Activated T-helper 1 cell treated with anti-CD3 and anti-CD28 coated beads, Interleukin-12 subunit alpha, Interleukin-12 subunit beta, Interleukin-2, Interleukin-4 antibody, amounts not matched to agents 30 ng/mL and 10 ng/mL and 1 ng/mL, durations not matched to agents 14 hours and 24 hours and 36 hours (primary cell): ENCODE measurements at regions of chr3 and their contacts with region 1.

Region 1: GRCh38 chr3:138915503-138916498 is 31.1 kb downstream of the FOXL2 start:
- DNase-seq: peak; percentile 68
- H3K4me3 Mint-ChIP-seq: peak overlapping the region; percentile 86
- H3K27ac Mint-ChIP-seq: peak overlapping the region; percentile 71
- H3K4me1 Mint-ChIP-seq: peaks cover 6% of the 10 kb centered on the region
- H3K27me3 Mint-ChIP-seq: peaks cover 16% of the 10 kb centered on the region

Region 2: GRCh38 chr3:138180375-138181029 is 735.3 kb before region 1 on chr3:
- intact Hi-C with region 1: loop called (anchors 5 kb)
- DNase-seq: no peak
- H3K4me3 Mint-ChIP-seq: no peak overlapping the region
- H3K27ac Mint-ChIP-seq: no peak overlapping the region
- H3K4me1 Mint-ChIP-seq: peaks cover 5% of the 10 kb centered on the region
- H3K27me3 Mint-ChIP-seq: peaks cover 12% of the 10 kb centered on the region

Region 3: GRCh38 chr3:138417559-138417982 is 498.2 kb before region 1 on chr3:
- intact Hi-C with region 1: loop called (anchors 2 kb)
- DNase-seq: peak; percentile 42
- H3K4me3 Mint-ChIP-seq: no peak overlapping the region
- H3K27ac Mint-ChIP-seq: no peak overlapping the region
- H3K4me1 Mint-ChIP-seq: no peaks in the 10 kb centered on the region
- H3K27me3 Mint-ChIP-seq: peaks cover 13% of the 10 kb centered on the region

Region 4: DNA sequence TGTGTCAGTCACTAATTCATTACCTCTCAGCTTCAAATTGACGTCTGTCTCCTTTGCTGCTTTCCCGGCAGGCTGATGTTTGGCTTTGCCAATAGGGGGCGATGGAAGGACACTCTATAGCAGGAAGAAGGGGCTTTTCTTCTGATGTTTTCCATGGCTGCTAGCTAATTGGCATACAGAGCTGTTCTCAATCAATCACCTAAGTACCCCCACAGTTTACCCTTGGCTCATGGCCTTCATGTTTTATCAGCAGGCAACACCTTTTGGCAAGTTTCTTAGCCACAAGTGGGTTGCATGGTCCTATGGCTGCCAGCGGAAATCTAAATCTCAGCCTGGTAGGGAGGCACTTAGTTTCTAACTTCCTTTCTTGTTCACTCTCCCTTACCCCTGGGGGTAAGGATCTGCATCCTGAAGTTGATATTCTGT is 436.4 kb before region 1 on chr3:
- intact Hi-C with region 1: loop called (anchors 1 kb)
- DNase-seq: no peak
- H3K4me3 Mint-ChIP-seq: no peak overlapping the region
- H3K27ac Mint-ChIP-seq: no peak overlapping the region
- H3K4me1 Mint-ChIP-seq: no peaks in the 10 kb centered on the region
- H3K27me3 Mint-ChIP-seq: peaks cover 10% of the 10 kb centered on the region

Region 5: DNA sequence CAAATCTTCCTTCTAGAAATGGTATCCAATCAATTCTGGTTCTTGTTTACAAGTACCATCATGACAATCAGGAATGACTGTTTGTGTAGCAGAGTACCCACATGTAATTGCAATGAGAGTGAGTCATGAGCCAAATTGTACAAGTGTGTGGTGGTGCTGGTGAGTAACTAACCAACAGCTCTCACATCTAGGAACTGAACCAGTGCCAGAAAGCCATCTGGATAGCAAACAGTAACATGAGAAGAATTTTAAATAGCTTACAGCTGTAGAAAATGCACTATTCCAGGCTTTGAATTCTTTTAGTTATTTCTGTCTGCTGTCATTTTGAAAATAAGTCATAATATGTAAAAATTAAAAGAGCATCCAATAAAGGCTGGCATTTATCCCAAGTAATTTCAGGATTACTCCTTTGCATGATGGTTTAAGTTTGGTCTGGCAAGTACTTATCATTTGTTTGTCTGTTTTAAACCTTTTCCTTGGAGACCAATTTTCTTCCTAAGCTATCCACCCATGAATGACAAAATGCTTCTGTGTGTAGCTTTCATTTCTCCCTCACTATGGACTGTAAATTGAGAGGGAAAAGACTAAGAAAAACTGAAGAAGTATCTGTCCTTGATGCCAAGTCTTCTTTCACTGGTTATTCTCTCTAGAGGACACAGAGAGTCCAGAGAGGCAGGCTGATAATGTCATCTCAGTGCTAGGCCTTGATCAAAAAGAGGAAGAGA is 141.1 kb before region 1 on chr3:
- intact Hi-C with region 1: loop called (anchors 5 kb)
- DNase-seq: no peak
- H3K4me3 Mint-ChIP-seq: no peak overlapping the region
- H3K27ac Mint-ChIP-seq: peak overlapping the region; percentile 59
- H3K4me1 Mint-ChIP-seq: peaks cover 32% of the 10 kb centered on the region
- H3K27me3 Mint-ChIP-seq: no peaks in the 10 kb centered on the region

Region 6: GRCh38 chr3:138850151-138850550 is 65.7 kb before region 1 on chr3:
- intact Hi-C with region 1: no loop called
- DNase-seq: no peak
- H3K4me3 Mint-ChIP-seq: no peak overlapping the region
- H3K27ac Mint-ChIP-seq: no peak overlapping the region
- H3K4me1 Mint-ChIP-seq: no peaks in the 10 kb centered on the region
- H3K27me3 Mint-ChIP-seq: peaks cover 2% of the 10 kb centered on the region